Activated naive CD8-positive, alpha-beta T cell treated with anti-CD3 and anti-CD28 coated beads, Interleukin-2, amount 10 ng/mL, durations not matched to agents 7 days and 5 days (primary cell): ENCODE measurements at regions of chr12 and their contacts with region 1.

Region 1: DNA sequence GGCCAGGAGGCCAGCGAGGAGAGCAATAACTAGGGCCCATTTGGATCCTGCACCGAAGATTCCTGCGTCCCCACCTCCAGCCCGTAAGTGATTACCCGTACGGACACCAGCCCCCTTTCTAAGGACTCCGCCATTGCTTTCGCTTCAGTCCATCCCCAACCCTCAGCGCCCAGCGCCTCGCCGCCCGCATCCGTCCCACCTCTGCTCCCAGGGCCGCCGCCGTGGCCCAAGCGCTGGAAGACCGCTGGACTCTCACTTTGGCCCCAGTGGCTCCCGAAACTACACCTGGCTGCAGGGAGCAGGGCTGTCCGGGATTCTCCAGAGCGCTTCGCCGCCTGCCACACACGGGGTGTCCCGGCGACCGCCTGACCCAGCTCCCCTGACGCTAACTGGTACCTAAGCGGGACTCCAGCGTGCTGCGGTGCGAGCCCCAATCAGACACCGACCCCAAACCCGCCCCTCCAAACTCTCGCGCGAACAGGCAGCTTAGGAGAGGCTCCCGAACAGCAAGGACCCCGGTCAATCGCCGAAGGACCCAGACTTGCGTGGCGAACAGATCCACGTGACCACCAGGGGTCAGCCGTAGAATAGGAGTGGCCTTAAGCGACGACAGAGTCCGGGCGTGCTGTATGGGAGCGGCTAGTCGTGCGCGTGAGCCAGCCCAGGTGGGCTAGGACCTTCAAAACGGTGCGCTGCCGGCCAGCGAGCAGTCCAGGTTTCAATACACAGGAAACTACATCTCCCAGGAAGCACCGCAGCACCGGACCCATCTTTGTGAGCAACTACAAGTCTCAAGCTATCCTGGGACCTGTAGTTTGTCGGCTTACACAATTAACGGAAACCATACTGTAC is at the start of gene CNPY2:
- DNase-seq: peak; percentile 91
- ATAC-seq: peak; percentile 93
- H3K4me3 Mint-ChIP-seq: peak within 1 kb of the TSS; percentile 97
- H3K27ac Mint-ChIP-seq: peak within 1 kb of the TSS; percentile 97
- H3K4me1 Mint-ChIP-seq: peaks cover 9% of the 10 kb centered on the region
- H3K27me3 Mint-ChIP-seq: no peaks in the 10 kb centered on the region
- total RNA-seq, gene CNPY2: 85.6 to 89.0 TPM

Region 2: DNA sequence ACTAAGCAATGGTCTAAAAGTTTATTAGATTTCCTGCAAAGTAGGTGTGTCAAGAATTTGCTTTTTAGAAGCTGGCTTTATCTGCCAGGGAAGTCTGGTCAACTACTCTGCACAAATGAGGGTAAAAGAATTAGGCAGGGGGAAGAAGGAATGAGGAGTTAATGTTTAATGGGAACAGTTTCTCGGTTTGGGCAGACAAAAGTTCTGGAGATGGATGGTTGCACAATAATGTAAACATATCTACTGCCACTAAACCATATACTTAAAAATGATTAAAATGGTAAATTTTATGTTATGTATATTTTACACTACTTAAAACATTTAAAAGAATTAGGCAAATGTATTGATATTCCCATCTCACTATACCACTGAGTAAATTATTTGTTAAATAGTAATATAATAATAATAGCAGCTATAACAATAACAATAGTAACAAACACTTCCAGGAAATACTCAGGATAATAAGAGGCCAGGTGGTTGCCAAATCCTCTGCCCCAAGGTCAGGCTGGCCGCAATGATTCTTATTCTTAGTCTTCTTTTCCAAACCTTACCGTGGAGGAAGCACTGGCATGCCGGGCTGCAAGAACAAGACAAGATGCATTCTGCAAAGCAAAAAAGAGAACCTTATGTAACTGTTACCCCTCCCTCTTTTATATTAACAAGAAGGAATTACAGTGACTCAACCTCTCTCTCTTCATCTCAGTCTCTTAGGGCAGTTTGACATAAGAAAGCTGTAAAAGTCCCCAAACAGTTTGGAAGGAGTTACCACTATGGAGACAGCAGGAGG is 29.6 kb before region 1 on chr12:
- POLR2A ChIA-PET with region 1: interaction called, 11 read pairs
- DNase-seq: no peak
- ATAC-seq: no peak
- H3K4me3 Mint-ChIP-seq: no peak overlapping the region
- H3K27ac Mint-ChIP-seq: peak overlapping the region; percentile 44
- H3K4me1 Mint-ChIP-seq: peaks cover 11% of the 10 kb centered on the region
- H3K27me3 Mint-ChIP-seq: no peaks in the 10 kb centered on the region

Region 3: DNA sequence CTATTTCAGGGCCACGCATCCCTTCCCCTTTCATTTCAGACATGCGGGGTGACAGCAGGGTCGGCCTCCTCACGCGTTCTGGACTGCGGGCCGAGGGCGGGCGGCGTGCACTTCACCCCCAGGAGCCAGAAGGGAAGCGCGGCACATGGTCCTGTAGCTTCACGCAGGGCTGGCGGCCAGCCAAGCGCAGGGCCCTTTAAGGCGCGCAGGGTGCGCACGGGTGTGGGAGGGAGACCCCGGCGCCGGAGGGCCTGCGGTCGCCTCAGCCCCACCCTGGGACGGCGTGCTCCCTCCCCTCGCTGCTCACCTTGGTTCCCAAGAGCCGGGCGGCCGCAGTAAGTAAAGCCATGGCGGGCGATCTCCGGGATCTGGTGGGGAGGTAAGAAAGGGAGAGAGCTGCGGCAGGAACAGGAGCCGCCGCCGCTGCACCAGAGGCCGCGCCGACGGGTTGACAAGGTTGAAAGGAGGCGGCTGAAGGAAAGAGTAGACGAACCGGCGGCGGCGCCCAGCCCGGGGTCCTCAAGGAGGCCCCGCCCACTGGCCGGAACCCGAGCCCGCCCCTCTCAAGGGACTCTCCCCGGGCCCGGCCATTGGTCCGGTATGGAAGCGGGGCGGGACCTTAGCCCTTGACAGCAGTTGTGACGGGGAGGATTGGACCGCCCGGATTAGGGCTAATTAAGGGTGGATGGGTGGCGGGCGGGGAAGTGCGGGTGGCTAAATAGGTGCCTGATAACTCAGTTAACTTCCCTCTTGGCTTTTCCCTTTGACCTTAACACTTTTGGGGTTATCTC is 15.8 kb before region 1 on chr12 and contains the start of gene CS:
- POLR2A ChIA-PET with region 1: interaction called, 14 read pairs
- DNase-seq: peak; percentile 98
- ATAC-seq: peak; percentile 96
- H3K4me3 Mint-ChIP-seq: peak within 1 kb of the TSS; percentile 96
- H3K27ac Mint-ChIP-seq: peak within 1 kb of the TSS; percentile 92
- H3K4me1 Mint-ChIP-seq: peaks cover 35% of the 10 kb centered on the region
- H3K27me3 Mint-ChIP-seq: no peaks in the 10 kb centered on the region
- total RNA-seq, gene CS: 165 to 176 TPM

Region 4: GRCh38 chr12:56333679-56334489 is 18.0 kb after region 1 on chr12 and contains the start of gene PAN2:
- POLR2A ChIA-PET with region 1: interaction called, 28 read pairs
- DNase-seq: peak; percentile 89
- ATAC-seq: peak; percentile 91
- H3K4me3 Mint-ChIP-seq: peak within 1 kb of the TSS; percentile 92
- H3K27ac Mint-ChIP-seq: peak within 1 kb of the TSS; percentile 94
- H3K4me1 Mint-ChIP-seq: peaks cover 32% of the 10 kb centered on the region
- H3K27me3 Mint-ChIP-seq: no peaks in the 10 kb centered on the region
- total RNA-seq, gene PAN2: 106 to 115 TPM

Region 5: DNA sequence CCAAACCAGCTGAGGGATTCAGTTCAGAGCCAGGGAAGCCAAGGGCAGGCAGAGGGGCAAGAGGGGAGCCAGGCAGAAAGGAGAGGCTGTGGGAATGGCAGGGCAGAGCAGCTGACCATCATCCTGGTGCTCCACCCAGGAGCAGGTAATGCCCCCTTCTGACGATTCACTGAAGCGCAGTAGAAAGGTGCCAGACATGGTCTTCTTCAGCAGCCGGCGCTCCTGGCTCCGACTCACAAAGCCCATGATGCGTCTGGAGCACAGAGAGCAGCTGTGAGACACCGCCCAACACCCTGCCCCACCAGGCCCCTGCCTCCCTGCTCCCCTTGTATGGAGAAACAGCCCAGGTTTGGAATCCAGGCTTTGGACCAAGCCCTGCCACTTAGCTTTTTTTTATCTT is 30.9 kb after region 1 on chr12:
- POLR2A ChIA-PET with region 1: interaction called, 12 read pairs
- DNase-seq: no peak
- ATAC-seq: peak; percentile 12
- H3K4me3 Mint-ChIP-seq: no peak overlapping the region
- H3K27ac Mint-ChIP-seq: peak overlapping the region; percentile 20
- H3K4me1 Mint-ChIP-seq: peaks cover 8% of the 10 kb centered on the region
- H3K27me3 Mint-ChIP-seq: no peaks in the 10 kb centered on the region

Region 6: GRCh38 chr12:56359851-56360767 is 44.3 kb after region 1 on chr12 and contains the start of gene STAT2:
- POLR2A ChIA-PET with region 1: interaction called, 52 read pairs
- DNase-seq: peak; percentile 99
- ATAC-seq: peak; percentile 95
- H3K4me3 Mint-ChIP-seq: peak within 1 kb of the TSS; percentile 98
- H3K27ac Mint-ChIP-seq: peak within 1 kb of the TSS; percentile 98
- H3K4me1 Mint-ChIP-seq: peaks cover 25% of the 10 kb centered on the region
- H3K27me3 Mint-ChIP-seq: no peaks in the 10 kb centered on the region
- total RNA-seq, gene STAT2: 263 to 275 TPM

Region 7: GRCh38 chr12:56377310-56377988 is 61.6 kb after region 1 on chr12:
- POLR2A ChIA-PET with region 1: no interaction called
- DNase-seq: no peak
- ATAC-seq: no peak
- H3K4me3 Mint-ChIP-seq: no peak overlapping the region
- H3K27ac Mint-ChIP-seq: no peak overlapping the region
- H3K4me1 Mint-ChIP-seq: peaks cover 1% of the 10 kb centered on the region
- H3K27me3 Mint-ChIP-seq: peaks cover 13% of the 10 kb centered on the region

Region 8: GRCh38 chr12:56468216-56469006 is 152.6 kb after region 1 on chr12 and contains the start of gene SPRYD4:
- POLR2A ChIA-PET with region 1: interaction called, 16 read pairs
- DNase-seq: peak; percentile 96
- ATAC-seq: peak; percentile 96
- H3K4me3 Mint-ChIP-seq: peak within 1 kb of the TSS; percentile 94
- H3K27ac Mint-ChIP-seq: peak within 1 kb of the TSS; percentile 97
- H3K4me1 Mint-ChIP-seq: peaks cover 25% of the 10 kb centered on the region
- H3K27me3 Mint-ChIP-seq: no peaks in the 10 kb centered on the region
- total RNA-seq, gene SPRYD4: 3.9 to 4.1 TPM